Sciatic nerve (tissue), 2 donors: ENCODE measurements at regions of chr2 and their contacts with region 1.

Region 1: GRCh38 chr2:44941551-44942234 is at the start of gene SIX3:
- DNase-seq: no peak
- ATAC-seq: no peak
- total RNA-seq, gene SIX3: not detected

Region 2: GRCh38 chr2:44498551-44498950 is 443.1 kb before region 1 on chr2:
- intact Hi-C with region 1: loop called (anchors 10 kb)
- DNase-seq: no peak
- ATAC-seq: no peak

Region 3: DNA sequence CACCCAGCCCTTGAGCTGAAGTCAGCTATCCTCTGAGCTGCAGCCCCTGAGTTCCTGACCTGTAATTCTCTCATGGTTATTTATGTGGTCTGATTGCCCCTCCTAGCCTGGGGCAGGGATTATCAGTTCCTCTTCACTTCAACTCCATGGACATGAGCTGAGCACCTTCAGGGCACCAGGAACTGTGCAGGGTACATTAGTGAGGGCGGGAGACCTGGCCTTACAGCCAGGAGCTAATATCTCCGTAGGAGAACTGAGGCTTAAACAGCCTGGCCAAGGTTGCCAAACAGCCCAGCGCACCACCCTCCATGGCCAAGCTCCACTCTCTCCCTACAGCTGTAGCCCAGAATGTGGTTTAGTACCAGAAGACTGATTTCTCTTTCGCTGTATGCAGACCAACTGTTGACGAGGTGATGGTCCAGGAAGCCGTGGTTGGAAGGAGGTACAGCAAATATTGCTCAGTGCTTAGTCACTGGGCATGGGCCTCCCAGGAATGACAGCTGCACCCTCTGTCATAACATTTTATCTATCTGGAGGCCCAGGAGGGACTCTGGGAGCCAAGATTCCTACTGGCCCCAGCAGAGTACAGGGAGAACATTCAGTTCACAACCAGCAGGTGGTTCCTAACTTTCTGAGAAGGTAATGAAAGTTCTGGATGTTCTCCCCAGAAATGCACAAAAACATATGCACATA is 296.3 kb after region 1 on chr2:
- intact Hi-C with region 1: no loop called
- DNase-seq: no peak
- ATAC-seq: peak; percentile 48